Psoas muscle (tissue), 8 donors: ENCODE measurements at regions of chr10 and their contacts with region 1.

Region 1: GRCh38 chr10:73644015-73644743 is 2.9 kb upstream of the MYOZ1 start:
- DNase-seq: peak in 1 of 2 donors; percentile 63
- ATAC-seq: peak; percentile 43 to 53 (median 47)
- H3K4me3 ChIP-seq: no peak overlapping the region
- H3K27ac ChIP-seq: peak overlapping the region; percentile 98
- H3K4me1 ChIP-seq: peaks cover 50% of the 10 kb centered on the region
- H3K27me3 ChIP-seq: no peaks in the 10 kb centered on the region
- CTCF ChIP-seq: peak; percentile 85

Region 2: GRCh38 chr10:73406846-73407245 is 237.3 kb before region 1 on chr10:
- intact Hi-C with region 1: no loop called
- DNase-seq: no peak
- ATAC-seq: no peak
- H3K4me3 ChIP-seq: no peak overlapping the region
- H3K27ac ChIP-seq: no peak overlapping the region
- H3K4me1 ChIP-seq: peaks cover 62% of the 10 kb centered on the region
- H3K27me3 ChIP-seq: no peaks in the 10 kb centered on the region
- CTCF ChIP-seq: no peak

Region 3: GRCh38 chr10:73529089-73529832 is 114.9 kb before region 1 on chr10:
- intact Hi-C with region 1: loop called (anchors 1 to 2 kb)
- DNase-seq: peak in 1 of 2 donors; percentile 15
- ATAC-seq: peak; percentile 78 to 93 (median 81)
- H3K4me3 ChIP-seq: no peak overlapping the region
- H3K27ac ChIP-seq: peak overlapping the region; percentile 54
- H3K4me1 ChIP-seq: peaks cover 28% of the 10 kb centered on the region
- H3K27me3 ChIP-seq: no peaks in the 10 kb centered on the region
- CTCF ChIP-seq: peak; percentile 87

Region 4: GRCh38 chr10:73552819-73553715 is 91.1 kb before region 1 on chr10:
- intact Hi-C with region 1: loop called in 1 of 2 experiments (anchors 5 kb)
- DNase-seq: peak in 1 of 2 donors; percentile 64
- ATAC-seq: peak; percentile 90 to 94 (median 92)
- H3K4me3 ChIP-seq: peak overlapping the region; percentile 54
- H3K27ac ChIP-seq: peak overlapping the region; percentile 88
- H3K4me1 ChIP-seq: peaks cover 67% of the 10 kb centered on the region
- H3K27me3 ChIP-seq: no peaks in the 10 kb centered on the region
- CTCF ChIP-seq: no peak